ENCODE measurements at regions of chr11 and their contacts with region 1.

Region 1: GRCh38 chr11:82775736-82776346 is 42.2 kb upstream of the FAM181B start:
- DNase-seq: peak; percentile 44 to 50
- H3K4me3 ChIP-seq: no peak overlapping the region
- H3K27ac ChIP-seq: no peak overlapping the region
- H3K4me1 ChIP-seq: no peaks in the 10 kb centered on the region
- H3K27me3 ChIP-seq: no peaks in the 10 kb centered on the region
- CTCF ChIP-seq: peak; percentile 89

Region 2: GRCh38 chr11:81080476-81080875 is 1695.4 kb before region 1 on chr11:
- CTCF ChIA-PET with region 1: no interaction called
- POLR2A ChIA-PET with region 1: no interaction called
- intact Hi-C with region 1: no loop called
- DNase-seq: no peak
- H3K4me3 ChIP-seq: no peak overlapping the region
- H3K27ac ChIP-seq: no peak overlapping the region
- H3K4me1 ChIP-seq: no peaks in the 10 kb centered on the region
- H3K27me3 ChIP-seq: no peaks in the 10 kb centered on the region
- CTCF ChIP-seq: no peak

Region 3: GRCh38 chr11:81658722-81659121 is 1117.1 kb before region 1 on chr11:
- CTCF ChIA-PET with region 1: interaction called, 11 read pairs
- POLR2A ChIA-PET with region 1: no interaction called
- intact Hi-C with region 1: no loop called
- DNase-seq: no peak
- H3K4me3 ChIP-seq: no peak overlapping the region
- H3K27ac ChIP-seq: no peak overlapping the region
- H3K4me1 ChIP-seq: no peaks in the 10 kb centered on the region
- H3K27me3 ChIP-seq: no peaks in the 10 kb centered on the region
- CTCF ChIP-seq: peak; percentile 72

Measured in PC-9 (cell line).